Activated CD4-positive, alpha-beta memory T cell treated with anti-CD3 and anti-CD28 coated beads for 36 hours (primary cell): ENCODE measurements at regions of chr15 and their contacts with region 1.

Region 1: GRCh38 chr15:25811481-25811906 is 51.6 kb downstream of the ATP10A start:
- DNase-seq: no peak
- H3K4me3 Mint-ChIP-seq: peak overlapping the region; percentile 22
- H3K27ac Mint-ChIP-seq: peak overlapping the region; percentile 57
- H3K4me1 Mint-ChIP-seq: peaks cover 61% of the 10 kb centered on the region
- H3K27me3 Mint-ChIP-seq: no peaks in the 10 kb centered on the region

Region 2: DNA sequence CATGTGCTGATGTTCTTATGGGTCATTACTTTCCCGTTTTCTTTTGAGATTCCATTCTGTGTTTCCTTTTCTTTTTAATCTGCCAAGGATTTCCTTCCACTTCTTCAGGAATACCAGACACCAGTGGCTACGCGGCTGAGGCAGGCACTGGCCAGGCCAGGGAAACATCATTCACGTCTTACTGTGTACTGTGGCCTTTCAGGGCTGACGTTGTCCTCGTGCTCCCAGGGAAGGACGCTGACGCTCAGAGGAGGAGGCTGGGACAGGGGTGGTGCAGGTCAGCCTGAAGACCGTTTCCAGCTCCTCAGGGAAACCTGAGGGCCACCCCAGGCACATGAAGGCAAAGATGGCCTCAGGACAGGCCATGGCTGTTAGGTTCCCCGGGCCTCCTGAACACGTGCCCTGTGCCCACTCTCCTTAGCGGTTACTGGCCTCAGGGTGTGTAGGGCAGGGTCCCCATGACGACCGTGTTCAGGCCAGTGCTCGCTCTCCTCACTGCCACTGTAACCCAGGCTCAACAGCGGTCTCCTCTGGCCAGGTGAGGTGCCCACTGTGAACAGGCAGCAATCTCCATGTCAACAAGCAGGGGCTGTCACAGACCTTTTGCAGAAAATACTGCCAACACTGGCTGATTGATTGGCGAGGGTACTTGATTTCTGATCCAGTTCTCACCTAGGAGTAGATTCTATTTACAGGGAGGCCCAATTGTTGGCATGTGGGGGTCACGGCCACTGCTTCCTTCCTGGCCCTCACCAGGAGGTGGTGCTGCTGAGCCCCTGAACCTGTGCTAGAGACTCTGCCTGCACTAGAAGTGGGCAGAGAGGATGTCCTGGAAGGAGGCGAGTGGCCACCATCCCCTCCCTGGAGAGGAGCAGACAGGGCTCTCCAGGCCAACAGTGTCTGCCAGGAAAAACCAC is 117.9 kb before region 1 on chr15:
- CTCF ChIA-PET with region 1: no interaction called
- POLR2A ChIA-PET with region 1: no interaction called
- intact Hi-C with region 1: no loop called
- DNase-seq: peak; percentile 49
- H3K4me3 Mint-ChIP-seq: no peak overlapping the region
- H3K27ac Mint-ChIP-seq: no peak overlapping the region
- H3K4me1 Mint-ChIP-seq: no peaks in the 10 kb centered on the region
- H3K27me3 Mint-ChIP-seq: no peaks in the 10 kb centered on the region

Region 3: DNA sequence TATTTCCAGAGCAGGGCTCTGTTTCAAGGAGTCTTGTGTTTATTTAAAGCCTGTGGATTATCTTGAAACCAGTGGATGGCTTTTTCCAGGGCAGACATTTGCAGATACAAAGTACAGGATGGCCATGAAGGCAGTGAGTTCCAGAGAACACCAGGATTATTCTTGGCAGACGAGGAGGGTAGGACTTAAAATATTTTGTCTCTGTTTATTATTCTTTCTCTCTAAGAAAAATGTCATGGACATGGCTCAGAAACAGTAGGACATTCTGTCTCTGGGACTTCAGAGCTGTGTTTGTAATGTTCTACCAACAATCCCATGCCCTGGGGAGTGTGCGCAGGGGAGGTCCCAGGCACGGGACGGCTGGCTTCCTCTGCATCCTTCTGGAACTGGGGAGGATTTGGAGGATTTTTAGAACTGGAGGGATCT is 74.3 kb before region 1 on chr15:
- CTCF ChIA-PET with region 1: no interaction called
- POLR2A ChIA-PET with region 1: no interaction called
- intact Hi-C with region 1: no loop called
- DNase-seq: no peak
- H3K4me3 Mint-ChIP-seq: no peak overlapping the region
- H3K27ac Mint-ChIP-seq: no peak overlapping the region
- H3K4me1 Mint-ChIP-seq: peaks cover 15% of the 10 kb centered on the region
- H3K27me3 Mint-ChIP-seq: no peaks in the 10 kb centered on the region

Region 4: GRCh38 chr15:25790000-25790660 is 21.4 kb before region 1 on chr15:
- CTCF ChIA-PET with region 1: no interaction called
- POLR2A ChIA-PET with region 1: no interaction called
- intact Hi-C with region 1: loop called (anchors 2 kb)
- DNase-seq: peak; percentile 75
- H3K4me3 Mint-ChIP-seq: peak overlapping the region; percentile 25
- H3K27ac Mint-ChIP-seq: peak overlapping the region; percentile 84
- H3K4me1 Mint-ChIP-seq: peaks cover 58% of the 10 kb centered on the region
- H3K27me3 Mint-ChIP-seq: no peaks in the 10 kb centered on the region